ENCODE measurements at regions of chr7 and their contacts with region 1.

Region 1: GRCh38 chr7:134126966-134127848 is at the start of gene LRGUK:
- DNase-seq: peak; percentile 64
- ATAC-seq: peak; percentile 100
- H3K4me3 ChIP-seq: peak within 1 kb of the TSS; percentile 72 to 94 (median 79)
- H3K27ac ChIP-seq: no peak within 1 kb of the TSS
- H3K4me1 ChIP-seq: peaks cover 12% of the 10 kb centered on the region; the same call in 1 of the 2 replicates
- H3K27me3 ChIP-seq: 0 out of 5 replicates have a peak, but pooled peaks cover 0 to 3% of the 10 kb centered on the region in 2 experiments
- CTCF ChIP-seq: no peak
- EP300 ChIP-seq: no peak
- POLR2A ChIP-seq: no peak
- RAD21 ChIP-seq: 0 out of 2 replicates have a peak, but pooled peaks have one; percentile 31
- total RNA-seq, gene LRGUK: 0.18 TPM in 1 of 2 replicates, not detected in the other

Region 2: DNA sequence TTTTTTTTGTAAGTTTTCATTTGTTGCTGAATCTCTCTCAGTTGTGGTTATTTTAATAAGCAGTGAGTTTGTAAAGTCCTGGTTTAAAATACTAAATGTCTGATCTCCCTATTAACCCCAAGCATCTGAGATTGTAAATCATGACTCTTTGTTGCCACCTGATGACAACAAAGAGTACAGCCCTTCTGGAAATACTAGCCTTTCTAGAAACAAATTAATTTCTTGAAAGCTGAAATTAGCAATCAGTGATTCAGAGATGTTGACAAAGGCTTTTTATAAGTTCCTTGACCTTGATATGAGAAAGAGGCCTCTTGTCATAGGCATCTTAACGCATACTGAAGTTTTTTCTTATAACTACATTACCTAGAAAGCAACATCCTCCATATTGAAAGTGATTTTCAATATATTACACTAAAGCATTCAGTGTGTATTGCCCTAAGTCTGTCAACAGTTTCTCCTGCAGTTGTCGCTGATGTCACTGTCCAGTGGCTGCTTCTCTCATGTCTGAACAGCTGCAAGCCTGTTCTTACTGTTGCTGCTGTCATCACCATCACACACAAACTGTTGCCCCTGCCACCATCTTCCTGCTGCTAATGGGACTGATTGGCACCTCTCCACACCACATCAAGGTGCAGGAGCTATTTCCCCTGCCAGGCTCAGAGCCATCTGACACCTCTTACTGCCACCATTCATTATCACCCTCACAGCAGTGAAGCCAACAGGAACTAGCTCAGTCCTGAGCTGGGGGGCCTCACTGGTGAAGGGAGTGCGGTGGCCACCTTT is 95.2 kb before region 1 on chr7:
- CTCF ChIA-PET with region 1: no interaction called
- POLR2A ChIA-PET with region 1: no interaction called
- in situ Hi-C with region 1: no loop called
- intact Hi-C with region 1: loop called (anchors 10 kb)
- DNase-seq: no peak
- ATAC-seq: no peak
- H3K4me3 ChIP-seq: no peak overlapping the region
- H3K27ac ChIP-seq: no peak overlapping the region
- H3K4me1 ChIP-seq: peaks cover 21% of the 10 kb centered on the region
- H3K27me3 ChIP-seq: no peaks in the 10 kb centered on the region
- CTCF ChIP-seq: no peak
- EP300 ChIP-seq: no peak
- POLR2A ChIP-seq: no peak
- RAD21 ChIP-seq: no peak

Region 3: DNA sequence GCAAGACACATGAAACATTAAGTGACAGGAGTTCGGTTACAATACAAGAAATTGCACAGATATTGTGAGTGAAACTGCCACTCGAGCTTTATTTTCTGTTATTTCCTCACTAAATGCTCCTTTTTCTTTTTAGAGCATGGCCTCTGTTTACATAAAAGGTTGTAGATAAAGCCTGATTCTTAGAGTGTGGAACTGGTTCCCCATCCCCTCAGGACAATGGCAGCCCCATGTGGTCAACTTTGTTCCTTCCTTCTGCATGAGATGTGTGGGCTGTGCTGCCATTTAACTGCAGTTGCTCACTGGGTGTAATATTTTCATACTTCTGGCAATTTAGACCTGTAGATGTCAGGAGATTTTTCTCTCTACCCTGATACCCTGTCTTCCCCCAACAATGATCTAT is 70.1 kb after region 1 on chr7:
- CTCF ChIA-PET with region 1: no interaction called
- POLR2A ChIA-PET with region 1: no interaction called
- in situ Hi-C with region 1: no loop called
- intact Hi-C with region 1: no loop called
- DNase-seq: no peak
- ATAC-seq: no peak
- H3K4me3 ChIP-seq: no peak overlapping the region
- H3K27ac ChIP-seq: no peak overlapping the region
- H3K4me1 ChIP-seq: no peaks in the 10 kb centered on the region
- H3K27me3 ChIP-seq: no peaks in the 10 kb centered on the region
- CTCF ChIP-seq: no peak
- EP300 ChIP-seq: no peak
- POLR2A ChIP-seq: no peak
- RAD21 ChIP-seq: no peak

Measured in HepG2 (cell line).